ENCODE measurements at regions of chr17 and their contacts with region 1.

Region 1: GRCh38 chr17:2192367-2193057 is 111.1 kb downstream of the SMG6 start:
- DNase-seq: peak; percentile 95 to 99 (median 99)
- H3K4me3 ChIP-seq: peak overlapping the region in 3 of 7 experiments; percentile 5 to 30 (median 25)
- H3K27ac ChIP-seq: peak overlapping the region in 1 of 2 experiments; percentile 37
- H3K4me1 ChIP-seq: peaks cover 19 to 66% (median 53%) of the 10 kb centered on the region in 4 experiments
- H3K27me3 ChIP-seq: no peaks in the 10 kb centered on the region

Region 2: GRCh38 chr17:2146132-2146871 is 46.2 kb before region 1 on chr17:
- CTCF ChIA-PET with region 1: no interaction called
- POLR2A ChIA-PET with region 1: no interaction called
- DNase-seq: no peak
- H3K4me3 ChIP-seq: no peak overlapping the region
- H3K27ac ChIP-seq: no peak overlapping the region
- H3K4me1 ChIP-seq: peaks cover 0 to 10% (median 3%) of the 10 kb centered on the region in 4 experiments
- H3K27me3 ChIP-seq: no peaks in the 10 kb centered on the region

Region 3: DNA sequence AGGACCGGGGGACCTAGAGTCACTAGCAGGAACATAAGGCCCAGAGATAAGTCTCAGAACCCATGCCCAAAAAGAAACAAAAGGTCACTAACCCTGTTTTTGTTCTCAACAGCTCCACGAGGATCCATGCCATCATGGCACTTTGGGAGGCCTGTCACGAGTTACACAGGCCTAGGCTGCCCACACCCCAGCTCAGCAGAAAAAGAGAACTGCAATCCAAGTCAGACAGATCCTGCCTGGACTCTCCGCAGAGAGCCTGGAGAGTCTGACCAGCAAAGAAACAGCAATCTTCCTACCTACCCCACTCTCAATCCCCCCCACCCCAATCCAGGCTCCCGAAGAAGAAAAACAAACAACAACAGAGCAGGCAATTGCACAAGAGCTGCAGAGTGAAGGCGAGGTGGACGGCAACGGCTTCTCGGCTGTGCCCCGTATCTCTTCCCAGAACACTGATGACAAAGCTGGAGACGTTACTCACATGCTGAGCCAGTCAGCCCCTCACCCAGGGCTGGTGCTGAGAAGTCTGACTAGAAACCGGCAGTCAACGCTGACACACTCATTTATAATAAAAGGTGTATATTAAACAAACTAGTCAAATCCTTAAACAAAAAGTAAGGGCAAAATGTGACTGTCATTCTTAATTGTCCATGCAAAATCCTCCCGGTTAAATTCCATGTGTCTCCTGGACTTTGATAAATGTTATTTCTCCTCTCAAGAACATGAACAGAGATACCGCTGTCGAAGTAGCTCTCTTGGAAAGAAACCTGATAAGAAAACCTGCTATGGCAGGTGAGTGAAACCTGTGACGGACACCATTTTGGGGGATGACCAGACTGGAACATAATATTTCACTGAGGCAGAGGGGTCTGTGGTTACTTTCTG is 21.8 kb after region 1 on chr17:
- CTCF ChIA-PET with region 1: interaction called, 10 read pairs
- POLR2A ChIA-PET with region 1: interaction called, 3 read pairs
- DNase-seq: peak in 1 of 3 donors; percentile 38
- H3K4me3 ChIP-seq: peak overlapping the region in 1 of 7 experiments; percentile 9
- H3K27ac ChIP-seq: peak overlapping the region; percentile 15 to 78
- H3K4me1 ChIP-seq: peaks cover 16 to 45% (median 32%) of the 10 kb centered on the region in 4 experiments
- H3K27me3 ChIP-seq: no peaks in the 10 kb centered on the region